Calu3 (cell line): ENCODE measurements at regions of chr9 and their contacts with region 1.

Region 1: GRCh38 chr9:134449221-134449894 is 123.1 kb downstream of the RXRA start:
- DNase-seq: peak; percentile 71
- H3K4me3 Mint-ChIP-seq: no peak overlapping the region
- H3K27ac Mint-ChIP-seq: no peak overlapping the region
- H3K4me1 Mint-ChIP-seq: no peaks in the 10 kb centered on the region
- H3K27me3 Mint-ChIP-seq: peaks cover 28% of the 10 kb centered on the region
- CTCF ChIP-seq: peak; percentile 23

Region 2: GRCh38 chr9:134525841-134526595 is 76.7 kb after region 1 on chr9:
- CTCF ChIA-PET with region 1: no interaction called
- intact Hi-C with region 1: no loop called
- DNase-seq: no peak
- H3K4me3 Mint-ChIP-seq: no peak overlapping the region
- H3K27ac Mint-ChIP-seq: no peak overlapping the region
- H3K4me1 Mint-ChIP-seq: no peaks in the 10 kb centered on the region
- H3K27me3 Mint-ChIP-seq: peaks cover 65% of the 10 kb centered on the region
- CTCF ChIP-seq: no peak

Region 3: DNA sequence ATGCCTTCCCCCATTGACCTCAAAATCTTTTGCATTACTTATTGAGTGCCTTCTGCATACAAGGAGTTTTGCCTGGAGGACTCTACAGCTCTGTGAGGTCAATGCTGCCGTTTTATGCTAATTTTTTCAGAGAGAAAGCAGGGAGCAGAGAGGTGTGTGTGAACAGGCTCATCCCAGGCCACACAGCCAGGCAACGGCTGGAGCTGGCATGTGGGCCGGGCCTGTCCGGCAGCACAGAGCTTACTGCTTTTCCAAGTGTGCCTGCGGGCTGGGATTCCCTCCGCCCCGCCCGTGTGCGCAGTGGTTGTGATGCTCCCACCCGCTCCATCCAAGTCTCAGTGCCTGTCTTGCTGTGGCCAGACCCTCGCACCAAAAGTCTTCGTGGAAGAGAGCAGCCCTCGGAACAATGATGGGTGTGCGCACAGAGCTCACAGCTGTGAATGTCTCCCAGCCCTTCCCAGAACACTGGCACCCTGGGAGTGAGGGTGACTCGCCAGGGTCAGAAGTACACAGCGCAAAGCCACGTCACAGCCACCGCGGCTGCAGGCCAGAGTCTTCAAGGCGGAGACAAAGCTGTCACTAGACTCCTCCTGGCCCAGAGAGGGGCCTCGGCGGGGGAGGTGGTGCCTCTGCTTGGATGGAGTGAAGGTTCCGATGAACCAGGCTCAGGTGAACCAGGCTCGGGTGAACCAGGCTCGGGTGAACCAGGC is 275.0 kb after region 1 on chr9:
- CTCF ChIA-PET with region 1: no interaction called
- intact Hi-C with region 1: no loop called
- DNase-seq: no peak
- H3K4me3 Mint-ChIP-seq: no peak overlapping the region
- H3K27ac Mint-ChIP-seq: no peak overlapping the region
- H3K4me1 Mint-ChIP-seq: no peaks in the 10 kb centered on the region
- H3K27me3 Mint-ChIP-seq: peaks cover 12% of the 10 kb centered on the region
- CTCF ChIP-seq: no peak

Region 4: GRCh38 chr9:134738869-134739659 is 289.7 kb after region 1 on chr9:
- CTCF ChIA-PET with region 1: interaction called, 10 read pairs
- intact Hi-C with region 1: no loop called
- DNase-seq: peak; percentile 59
- H3K4me3 Mint-ChIP-seq: no peak overlapping the region
- H3K27ac Mint-ChIP-seq: no peak overlapping the region
- H3K4me1 Mint-ChIP-seq: no peaks in the 10 kb centered on the region
- H3K27me3 Mint-ChIP-seq: peaks cover 27% of the 10 kb centered on the region
- CTCF ChIP-seq: peak; percentile 50